Posterior cingulate gyrus (tissue), 11 donors: ENCODE measurements at regions of chr14 and their contacts with region 1.

Region 1: GRCh38 chr14:68248481-68249255 is 429.1 kb downstream of the RAD51B start:
- DNase-seq: peak in 3 of 10 donors; percentile 10 to 80 (median 78)

Region 2: GRCh38 chr14:67943947-67944346 is 304.7 kb before region 1 on chr14:
- intact Hi-C with region 1: loop called (anchors 10 kb)
- DNase-seq: peak in 5 of 10 donors; percentile 5 to 36 (median 22)

Region 3: DNA sequence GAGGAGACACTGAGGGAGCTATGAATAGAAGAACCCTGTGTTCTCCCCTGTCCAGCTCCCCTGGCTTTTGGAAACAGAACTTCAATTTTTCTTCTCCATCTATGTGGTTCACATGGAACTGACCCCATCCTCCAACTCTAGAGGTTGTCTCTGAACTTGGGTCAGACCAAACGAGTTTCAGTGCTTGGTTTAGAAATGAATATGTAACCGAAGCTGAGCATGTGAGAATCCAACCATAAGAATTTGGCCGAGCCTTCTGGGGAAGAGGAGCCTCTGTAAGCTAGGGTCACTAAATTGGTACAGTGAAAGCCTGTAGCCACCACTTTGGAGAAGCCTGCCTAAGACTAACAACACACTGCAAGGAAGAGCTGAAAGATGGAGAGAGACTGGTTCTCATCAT is 79.8 kb after region 1 on chr14:
- intact Hi-C with region 1: no loop called
- DNase-seq: no peak

Region 4: DNA sequence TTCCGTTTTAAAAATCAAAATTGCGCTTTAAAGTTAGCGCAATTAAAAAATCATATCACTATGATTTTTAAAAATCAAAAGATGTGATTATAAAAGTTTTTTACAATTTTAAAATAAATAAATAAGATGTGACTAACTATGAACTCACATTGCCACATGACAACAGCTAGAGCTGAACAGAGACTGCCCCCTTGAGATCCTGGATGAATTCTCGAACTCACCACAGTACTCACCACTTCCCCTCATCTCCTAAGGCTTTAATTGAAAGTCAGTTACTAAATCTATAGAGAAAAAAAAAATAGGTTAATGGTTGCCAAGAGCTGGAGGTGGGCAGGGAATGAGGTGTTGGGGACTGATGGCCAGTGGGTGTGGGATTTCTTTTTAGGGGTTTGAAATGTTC is 160.0 kb after region 1 on chr14:
- intact Hi-C with region 1: loop called (anchors 10 kb)
- DNase-seq: no peak

Region 5: GRCh38 chr14:68788996-68789820 is 540.5 kb after region 1 on chr14:
- intact Hi-C with region 1: loop called (anchors 1 kb)
- DNase-seq: peak; percentile 61 to 97 (median 78)

Region 6: GRCh38 chr14:68816262-68816942 is 567.7 kb after region 1 on chr14:
- intact Hi-C with region 1: loop called (anchors 1 kb)
- DNase-seq: peak; percentile 78 to 98 (median 88)